ENCODE measurements at regions of chr1 and their contacts with region 1.

Region 1: GRCh38 chr1:42420911-42421585 is 34.8 kb downstream of the ZMYND12 start:
- DNase-seq: peak; percentile 83
- H3K4me3 ChIP-seq: no peak overlapping the region
- H3K27ac ChIP-seq: no peak overlapping the region
- H3K4me1 ChIP-seq: peaks cover 10% of the 10 kb centered on the region
- H3K27me3 ChIP-seq: no peaks in the 10 kb centered on the region
- CTCF ChIP-seq: no peak

Region 2: GRCh38 chr1:42348498-42348897 is 72.5 kb before region 1 on chr1:
- CTCF ChIA-PET with region 1: interaction called, 11 read pairs
- POLR2A ChIA-PET with region 1: no interaction called
- intact Hi-C with region 1: no loop called
- DNase-seq: no peak
- H3K4me3 ChIP-seq: no peak overlapping the region
- H3K27ac ChIP-seq: no peak overlapping the region
- H3K4me1 ChIP-seq: no peaks in the 10 kb centered on the region
- H3K27me3 ChIP-seq: no peaks in the 10 kb centered on the region
- CTCF ChIP-seq: no peak

Measured in A673 (cell line).